Right ventricle myocardium inferior (tissue), 1 donor: ENCODE measurements at regions of chr10 and their contacts with region 1.

Region 1: GRCh38 chr10:27241652-27242472 is 1.3 kb upstream of the ACBD5 start:
- DNase-seq: peak; percentile 97
- ATAC-seq: peak; percentile 93

Region 2: DNA sequence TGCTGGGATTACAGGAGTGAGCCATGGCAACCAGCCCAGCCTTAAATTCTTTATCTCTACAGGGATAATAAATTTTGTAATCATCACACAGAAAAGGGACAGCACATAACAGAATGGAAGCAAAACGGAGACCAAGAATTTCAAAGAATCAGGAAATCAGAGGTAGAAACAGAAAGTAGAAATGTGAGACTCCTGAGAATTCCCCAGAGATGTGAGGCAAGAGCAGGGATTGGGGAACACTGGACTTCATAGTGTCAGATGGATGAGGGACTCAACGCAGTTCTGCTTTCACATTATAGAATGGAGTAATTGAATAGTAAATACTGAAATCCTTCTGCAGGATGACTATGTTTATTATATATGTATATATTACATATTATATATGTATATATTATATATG is 1113.5 kb after region 1 on chr10:
- intact Hi-C with region 1: no loop called
- DNase-seq: no peak
- ATAC-seq: no peak

Region 3: GRCh38 chr10:28532383-28533175 is 1290.7 kb after region 1 on chr10 and contains the start of gene WAC:
- intact Hi-C with region 1: loop called (anchors 5 kb)
- DNase-seq: peak; percentile 98
- ATAC-seq: peak; percentile 95
- total RNA-seq, gene WAC: 100 TPM